ENCODE measurements at regions of chr4 and their contacts with region 1.

Region 1: DNA sequence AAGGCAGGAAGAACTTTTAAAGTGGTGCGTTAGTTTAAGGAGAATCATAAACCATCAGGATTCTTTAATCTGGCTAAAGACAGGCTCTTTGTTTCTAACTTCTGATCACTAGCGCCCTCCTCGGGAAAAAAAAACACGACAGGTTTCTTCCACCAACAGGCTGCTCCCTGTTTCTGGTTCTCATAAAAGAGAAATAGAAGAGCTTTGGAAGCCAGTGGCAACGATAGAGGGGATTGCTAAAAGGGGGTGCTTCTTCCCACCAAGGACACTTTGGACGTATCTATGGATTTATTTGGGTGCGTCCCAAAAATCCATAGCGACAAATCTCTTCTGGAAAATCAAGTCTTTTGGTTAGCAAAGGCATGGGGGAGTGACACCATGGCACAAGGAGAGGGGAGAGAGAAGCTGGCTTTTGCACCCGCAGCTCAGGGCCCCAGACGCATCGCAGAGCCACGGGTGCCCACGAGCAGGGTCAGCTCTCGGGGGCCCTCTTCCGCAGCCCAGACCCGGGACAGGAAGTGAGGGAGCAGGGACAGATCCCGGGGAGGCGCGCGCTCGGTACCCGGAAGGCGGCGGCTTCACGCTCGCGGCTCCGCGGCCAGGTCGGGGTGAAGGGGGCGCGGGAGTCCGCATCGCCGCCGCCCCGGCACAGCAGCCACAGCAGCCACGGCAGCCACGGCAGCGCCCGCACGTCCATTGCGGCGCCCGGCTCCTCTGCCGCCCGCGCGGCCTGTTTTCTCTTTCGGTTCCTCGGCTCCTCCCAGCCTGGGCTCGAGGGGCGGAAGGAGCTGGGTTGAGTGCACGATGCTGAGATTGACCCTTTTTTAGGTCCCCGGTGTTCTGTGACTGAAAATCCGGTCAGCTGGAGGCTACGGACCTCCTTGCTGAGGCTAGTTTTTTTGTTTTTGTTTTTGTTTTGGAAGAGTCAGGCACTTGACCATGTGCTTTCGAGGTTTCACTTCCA is at the start of gene CTSO:
- DNase-seq: peak; percentile 72 to 79 (median 76)
- H3K4me3 ChIP-seq: peak within 1 kb of the TSS; percentile 47 to 92
- H3K4me3 Mint-ChIP-seq: peak within 1 kb of the TSS; percentile 97 to 100 (median 99)
- H3K27ac ChIP-seq: peak within 1 kb of the TSS; percentile 87
- H3K27ac Mint-ChIP-seq: peak within 1 kb of the TSS; percentile 99 to 100 (median 99)
- H3K4me1 ChIP-seq: peaks cover 17% of the 10 kb centered on the region
- H3K4me1 Mint-ChIP-seq: peaks cover 10 to 38% (median 27%) of the 10 kb centered on the region in 4 donors
- H3K27me3 ChIP-seq: no peaks in the 10 kb centered on the region
- H3K27me3 Mint-ChIP-seq: peaks cover 2 to 4% of the 10 kb centered on the region in 2 donors
- total RNA-seq, gene CTSO: 12.9 to 13.1 TPM

Region 2: DNA sequence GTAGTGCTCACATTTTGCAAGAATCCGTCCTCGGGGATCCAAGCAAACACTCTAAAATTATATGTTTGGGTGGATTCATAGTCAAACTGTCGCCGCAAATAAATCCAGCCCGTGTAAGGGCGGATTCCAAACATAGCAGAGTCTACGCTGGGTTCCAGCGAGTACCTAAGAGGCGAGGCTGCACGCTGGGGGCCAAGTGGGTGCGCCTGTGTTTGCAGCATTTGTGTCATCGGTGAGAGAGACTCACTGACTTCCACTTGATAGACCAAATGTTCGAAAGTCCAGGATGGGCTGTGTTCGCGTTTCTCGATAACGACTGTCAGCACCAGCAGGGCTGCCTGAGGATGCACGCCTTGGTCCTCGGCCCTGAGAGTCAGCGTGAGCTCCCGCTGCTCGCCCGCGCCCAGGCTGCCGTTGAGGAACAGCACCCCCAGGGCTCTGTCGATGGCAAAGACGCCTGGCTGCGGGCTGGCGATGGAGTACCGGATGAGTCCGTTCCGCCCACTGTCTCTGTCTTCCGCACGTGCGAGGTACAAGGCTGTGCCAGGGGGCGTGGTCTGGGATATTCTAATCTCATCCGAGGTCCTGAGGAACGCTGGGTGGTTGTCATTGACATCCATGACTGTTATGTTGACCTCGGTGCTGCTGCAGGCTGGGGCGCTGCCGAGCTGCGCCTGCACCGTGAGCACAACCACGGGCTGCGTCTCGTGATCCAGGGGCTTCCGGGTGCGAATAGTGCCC is 1620.6 kb before region 1 on chr4:
- CTCF ChIA-PET with region 1: no interaction called
- POLR2A ChIA-PET with region 1: no interaction called
- intact Hi-C with region 1: loop called (anchors 5 kb)
- DNase-seq: peak; percentile 34 to 64 (median 47)
- H3K4me3 ChIP-seq: peak overlapping the region in 1 of 2 donors; percentile 52
- H3K4me3 Mint-ChIP-seq: peak overlapping the region; percentile 75 to 92 (median 84)
- H3K27ac ChIP-seq: no peak overlapping the region
- H3K27ac Mint-ChIP-seq: peak overlapping the region in 4 of 7 donors; percentile 11 to 83 (median 52)
- H3K4me1 ChIP-seq: peaks cover 14% of the 10 kb centered on the region
- H3K4me1 Mint-ChIP-seq: peaks cover 5 to 13% (median 7%) of the 10 kb centered on the region in 4 donors
- H3K27me3 ChIP-seq: peaks cover 4% of the 10 kb centered on the region
- H3K27me3 Mint-ChIP-seq: peaks cover 9 to 10% of the 10 kb centered on the region in 2 donors

Region 3: DNA sequence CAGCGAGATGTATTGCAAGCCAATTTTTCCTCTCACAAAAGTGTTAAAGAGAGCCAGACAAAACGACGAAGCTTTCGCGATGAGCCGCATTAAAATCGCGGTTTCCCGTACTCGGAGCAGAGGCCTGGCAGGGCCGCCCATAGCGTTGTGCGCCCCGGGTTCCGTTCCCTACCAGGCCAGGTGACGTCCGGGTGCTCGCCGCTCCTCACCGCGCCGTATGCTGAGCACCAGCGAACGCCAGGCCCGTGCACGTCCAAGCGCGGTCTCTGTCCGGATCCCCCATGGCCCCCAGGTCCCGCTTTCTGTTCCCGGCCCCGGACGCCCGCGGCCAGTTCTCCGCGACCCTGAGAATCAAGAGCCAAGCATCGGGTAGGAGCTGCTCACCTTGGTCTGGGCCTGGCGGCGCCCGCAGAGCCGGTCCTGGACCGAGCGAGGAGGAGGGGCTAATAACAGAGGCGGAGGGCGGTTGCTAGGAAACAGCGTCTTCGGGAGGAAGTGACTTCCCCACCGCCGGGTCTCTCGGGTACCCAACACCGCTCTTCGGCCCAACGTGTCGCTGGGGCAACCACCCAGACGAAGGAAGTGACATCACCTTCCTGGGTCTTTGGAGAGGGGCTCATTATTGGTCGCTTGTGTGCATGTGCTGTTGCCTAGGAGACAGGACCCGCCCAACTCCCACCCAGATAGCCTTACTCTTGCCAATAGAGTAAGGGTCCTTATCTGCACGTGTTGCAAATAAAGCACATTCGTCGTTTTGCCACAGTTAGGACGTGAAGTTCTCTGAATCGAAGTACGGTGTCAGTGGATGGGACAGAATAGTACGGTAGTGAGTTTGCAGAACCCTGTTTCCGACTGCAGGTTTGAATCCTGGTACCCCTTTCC is 576.8 kb before region 1 on chr4 and contains the start of gene MAP9:
- CTCF ChIA-PET with region 1: interaction called, 3 read pairs
- POLR2A ChIA-PET with region 1: interaction called, 4 read pairs
- intact Hi-C with region 1: loop called (anchors 1 kb)
- DNase-seq: peak; percentile 89 to 95 (median 93)
- H3K4me3 ChIP-seq: peak within 1 kb of the TSS; percentile 24 to 60
- H3K4me3 Mint-ChIP-seq: peak within 1 kb of the TSS; percentile 86 to 92 (median 90)
- H3K27ac ChIP-seq: peak within 1 kb of the TSS; percentile 69
- H3K27ac Mint-ChIP-seq: peak within 1 kb of the TSS; percentile 95 to 99 (median 96)
- H3K4me1 ChIP-seq: peaks cover 15% of the 10 kb centered on the region
- H3K4me1 Mint-ChIP-seq: peaks cover 12 to 27% (median 18%) of the 10 kb centered on the region in 4 donors
- H3K27me3 ChIP-seq: no peaks in the 10 kb centered on the region
- H3K27me3 Mint-ChIP-seq: no peaks in the 10 kb centered on the region
- total RNA-seq, gene MAP9: 5.8 to 7.9 TPM

Region 4: GRCh38 chr4:155809835-155810234 is 143.6 kb before region 1 on chr4:
- CTCF ChIA-PET with region 1: interaction called, 15 read pairs
- POLR2A ChIA-PET with region 1: no interaction called
- intact Hi-C with region 1: loop called (anchors 1 kb)
- DNase-seq: peak in 4 of 5 donors; percentile 36 to 53 (median 36)
- H3K4me3 ChIP-seq: no peak overlapping the region
- H3K4me3 Mint-ChIP-seq: no peak overlapping the region
- H3K27ac ChIP-seq: no peak overlapping the region
- H3K27ac Mint-ChIP-seq: no peak overlapping the region
- H3K4me1 ChIP-seq: no peaks in the 10 kb centered on the region
- H3K4me1 Mint-ChIP-seq: no peaks in the 10 kb centered on the region
- H3K27me3 ChIP-seq: no peaks in the 10 kb centered on the region
- H3K27me3 Mint-ChIP-seq: peaks cover 0 to 3% of the 10 kb centered on the region in 2 donors

Measured in CD4-positive, alpha-beta memory T cell (primary cell).